Sciatic nerve (tissue), 2 donors: ENCODE measurements at regions of chr7 and their contacts with region 1.

Region 1: DNA sequence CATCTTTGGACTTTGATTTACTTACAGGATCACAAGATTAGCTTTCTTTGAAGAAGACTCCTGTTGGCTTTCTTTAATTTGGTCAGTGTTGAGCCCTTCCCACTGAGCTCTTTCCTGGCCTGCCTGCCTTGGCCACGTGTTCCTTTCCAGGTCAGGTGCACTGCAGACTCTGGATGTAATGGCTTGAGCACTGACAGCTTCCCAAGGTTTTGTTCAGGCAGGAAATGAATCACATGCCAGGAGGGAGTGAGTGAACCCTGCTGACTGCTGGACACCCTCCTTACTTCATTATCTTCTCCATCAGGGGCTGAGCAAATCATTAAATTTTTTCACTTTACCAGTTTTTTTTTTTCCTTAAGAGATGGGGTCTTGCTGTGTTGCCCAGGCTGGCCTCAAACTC is 29.8 kb downstream of the SNX10 start:
- DNase-seq: no peak
- ATAC-seq: no peak

Region 2: GRCh38 chr7:26052721-26053120 is 268.7 kb before region 1 on chr7:
- intact Hi-C with region 1: no loop called
- DNase-seq: no peak
- ATAC-seq: no peak

Region 3: GRCh38 chr7:26291699-26292538 is 29.5 kb before region 1 on chr7 and contains the start of gene SNX10:
- intact Hi-C with region 1: loop called (anchors 1 kb)
- DNase-seq: no peak
- ATAC-seq: peak; percentile 59
- total RNA-seq, gene SNX10: 7.0 TPM